ENCODE measurements at regions of chr11 and their contacts with region 1.

Region 1: GRCh38 chr11:67288452-67289225 is 464 bp upstream of the ANKRD13D start:
- DNase-seq: peak; percentile 85 to 95 (median 94)
- ATAC-seq: peak; percentile 67 to 71
- H3K4me3 Mint-ChIP-seq: peak overlapping the region; percentile 78 to 90 (median 88)
- H3K27ac Mint-ChIP-seq: peak overlapping the region; percentile 97 to 100 (median 98)
- H3K4me1 Mint-ChIP-seq: peaks cover 24 to 76% (median 62%) of the 10 kb centered on the region in 4 donors
- H3K27me3 Mint-ChIP-seq: no peaks in the 10 kb centered on the region

Region 2: GRCh38 chr11:67118801-67119584 is 169.6 kb before region 1 on chr11 and contains the start of gene KDM2A:
- POLR2A ChIA-PET with region 1: interaction called, 10 read pairs
- DNase-seq: peak; percentile 84 to 100 (median 98)
- ATAC-seq: peak; percentile 77 to 82
- H3K4me3 Mint-ChIP-seq: peak within 1 kb of the TSS; percentile 91 to 99 (median 96)
- H3K27ac Mint-ChIP-seq: peak within 1 kb of the TSS; percentile 82 to 97 (median 96)
- H3K4me1 Mint-ChIP-seq: peaks cover 21 to 55% (median 40%) of the 10 kb centered on the region in 4 donors
- H3K27me3 Mint-ChIP-seq: no peaks in the 10 kb centered on the region
- polyA plus RNA-seq, gene KDM2A: 8.0 to 12.9 (median 9.9) TPM

Region 3: GRCh38 chr11:67317205-67317887 is 28.7 kb after region 1 on chr11:
- POLR2A ChIA-PET with region 1: interaction called, 2,293 read pairs
- DNase-seq: peak; percentile 92 to 99 (median 98)
- ATAC-seq: peak; percentile 88 to 89
- H3K4me3 Mint-ChIP-seq: peak overlapping the region; percentile 93 to 100 (median 99)
- H3K27ac Mint-ChIP-seq: peak overlapping the region; percentile 89 to 98 (median 96)
- H3K4me1 Mint-ChIP-seq: peaks cover 22 to 54% (median 40%) of the 10 kb centered on the region in 4 donors
- H3K27me3 Mint-ChIP-seq: no peaks in the 10 kb centered on the region

Region 4: DNA sequence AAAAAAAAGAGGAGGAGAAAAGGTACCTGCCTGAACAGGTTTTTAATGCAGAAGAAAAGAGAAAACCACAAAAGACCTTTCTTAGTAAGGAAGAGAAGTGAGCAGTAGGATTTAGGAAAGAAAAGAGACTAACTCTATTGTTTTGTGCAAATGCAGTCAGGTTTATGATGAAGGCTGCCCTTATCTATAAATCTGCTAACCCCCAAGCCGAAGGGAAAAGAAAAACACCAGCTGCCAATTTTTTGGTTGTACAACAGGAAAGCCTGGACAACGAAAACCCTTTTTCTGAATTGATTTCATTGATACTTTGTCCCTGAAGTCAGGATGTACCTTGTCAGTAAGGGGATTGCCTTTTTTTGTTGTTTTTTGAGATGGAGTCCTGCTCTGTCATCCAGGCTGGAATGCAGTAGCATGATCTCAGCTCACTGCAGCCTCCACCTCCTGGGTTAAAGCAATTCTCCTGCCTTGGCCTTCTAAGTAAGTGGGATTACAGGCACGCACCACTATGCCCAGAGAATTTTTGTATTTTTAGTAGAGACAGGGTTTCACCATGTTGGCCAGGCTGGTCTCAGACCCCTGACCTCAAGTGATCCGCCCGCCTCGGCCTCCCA is 43.5 kb after region 1 on chr11:
- POLR2A ChIA-PET with region 1: no interaction called
- DNase-seq: no peak
- ATAC-seq: no peak
- H3K4me3 Mint-ChIP-seq: no peak overlapping the region
- H3K27ac Mint-ChIP-seq: no peak overlapping the region
- H3K4me1 Mint-ChIP-seq: peaks cover 0 to 3% (median 0%) of the 10 kb centered on the region in 4 donors
- H3K27me3 Mint-ChIP-seq: no peaks in the 10 kb centered on the region

Region 5: DNA sequence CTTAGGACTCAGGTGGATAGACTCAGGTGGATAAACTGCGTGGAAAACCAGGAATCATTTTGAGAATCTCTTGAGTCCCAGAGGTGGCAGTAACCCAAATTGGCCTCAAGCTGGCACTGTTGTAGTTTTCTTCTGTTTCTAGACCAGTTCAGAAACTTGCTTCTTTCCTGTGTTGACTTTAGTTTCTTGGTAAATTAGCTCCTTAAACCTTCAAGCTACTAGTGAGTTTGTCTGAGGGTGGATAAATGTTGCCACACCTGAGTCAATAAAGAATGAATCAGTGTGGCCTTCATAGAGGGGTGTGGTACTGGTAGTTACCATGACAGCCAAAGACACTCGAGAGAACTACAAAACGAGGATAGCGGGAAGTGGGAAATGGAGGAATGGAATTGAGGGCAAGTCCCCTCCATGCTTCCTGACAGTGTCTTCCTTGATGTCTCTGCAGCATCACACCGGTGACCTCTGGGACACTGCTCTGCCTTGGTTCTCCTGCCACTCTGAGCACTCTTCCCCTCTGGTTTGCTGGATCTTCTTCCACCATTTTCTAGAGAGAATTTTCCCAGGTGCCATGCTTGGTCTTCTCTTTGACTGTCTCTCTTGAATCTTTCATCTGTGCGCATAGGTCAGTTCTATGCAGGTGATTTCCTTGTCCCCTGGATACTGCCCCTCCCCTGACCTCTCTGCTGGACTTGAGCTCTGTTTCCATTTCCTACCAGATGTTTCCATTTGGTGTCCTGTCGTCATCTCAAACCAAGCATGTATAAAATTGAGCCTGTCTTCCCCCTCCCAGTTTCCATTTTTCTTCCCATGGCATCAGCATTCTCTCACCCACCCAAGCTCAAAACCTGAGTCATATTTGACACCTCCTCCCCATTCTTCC is 57.5 kb after region 1 on chr11:
- POLR2A ChIA-PET with region 1: interaction called, 35 read pairs
- DNase-seq: peak in 3 of 10 donors; percentile 29 to 57 (median 47)
- ATAC-seq: peak; percentile 58 to 74
- H3K4me3 Mint-ChIP-seq: peak overlapping the region in 8 of 10 donors; percentile 12 to 76 (median 66)
- H3K27ac Mint-ChIP-seq: peak overlapping the region in 9 of 10 donors; percentile 89 to 99 (median 94)
- H3K4me1 Mint-ChIP-seq: peaks cover 29 to 65% (median 61%) of the 10 kb centered on the region in 4 donors
- H3K27me3 Mint-ChIP-seq: no peaks in the 10 kb centered on the region

Region 6: DNA sequence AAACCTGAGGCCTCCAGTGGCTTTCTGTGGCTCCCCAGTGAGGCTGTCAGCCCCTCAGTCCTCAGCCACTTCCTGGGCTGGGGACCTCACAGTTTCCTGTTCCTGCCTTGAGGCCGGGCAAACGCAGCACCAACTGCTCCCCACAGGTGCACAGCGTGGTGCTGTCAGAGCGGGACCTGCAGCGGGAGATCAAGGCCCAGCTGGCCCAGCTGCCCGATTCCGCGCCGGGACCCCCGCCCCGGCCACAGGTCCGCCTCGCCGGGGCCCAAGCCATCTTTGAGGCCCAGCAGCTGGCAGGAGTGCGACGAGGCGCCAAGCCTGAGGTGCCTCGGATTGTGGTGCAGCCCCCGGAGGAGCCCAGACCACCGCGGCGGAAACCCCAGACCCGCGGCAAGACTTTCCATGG is 120.6 kb after region 1 on chr11:
- POLR2A ChIA-PET with region 1: interaction called, 12 read pairs
- DNase-seq: peak; percentile 46 to 90 (median 76)
- ATAC-seq: peak; percentile 73 to 85
- H3K4me3 Mint-ChIP-seq: peak overlapping the region; percentile 93 to 99 (median 98)
- H3K27ac Mint-ChIP-seq: peak overlapping the region; percentile 53 to 98 (median 94)
- H3K4me1 Mint-ChIP-seq: peaks cover 44 to 96% (median 88%) of the 10 kb centered on the region in 4 donors
- H3K27me3 Mint-ChIP-seq: no peaks in the 10 kb centered on the region